ENCODE measurements at regions of chr3 and their contacts with region 1.

Region 1: DNA sequence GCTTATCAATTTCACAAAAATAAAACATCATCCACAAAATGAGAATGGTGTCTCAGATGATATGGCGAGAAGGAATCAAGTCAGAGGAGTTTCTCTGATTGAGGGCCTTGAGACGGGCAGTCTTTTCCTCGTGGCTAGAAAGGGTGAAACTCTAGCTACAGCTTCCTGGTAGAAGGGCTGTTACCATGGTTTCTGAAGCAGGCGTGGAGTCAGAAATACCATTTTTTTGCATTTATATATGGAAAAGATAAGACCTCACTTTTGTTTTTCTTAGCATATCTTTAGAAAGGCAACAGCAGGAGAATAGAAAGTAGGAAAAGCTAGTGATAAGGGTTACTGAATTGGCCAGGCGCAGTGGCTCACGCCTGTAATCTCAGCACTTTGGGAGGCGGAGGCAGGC is 17.3 kb upstream of the SAMD7 start:
- DNase-seq: no peak

Region 2: GRCh38 chr3:168834558-168834957 is 1059.6 kb before region 1 on chr3:
- intact Hi-C with region 1: loop called in 1 of 2 experiments (anchors 5 kb)
- DNase-seq: no peak

Region 3: GRCh38 chr3:169857811-169858210 is 36.3 kb before region 1 on chr3:
- intact Hi-C with region 1: loop called in 1 of 2 experiments (anchors 2 kb)
- DNase-seq: no peak